CD8-positive, alpha-beta memory T cell (primary cell): ENCODE measurements at regions of chr11 and their contacts with region 1.

Region 1: DNA sequence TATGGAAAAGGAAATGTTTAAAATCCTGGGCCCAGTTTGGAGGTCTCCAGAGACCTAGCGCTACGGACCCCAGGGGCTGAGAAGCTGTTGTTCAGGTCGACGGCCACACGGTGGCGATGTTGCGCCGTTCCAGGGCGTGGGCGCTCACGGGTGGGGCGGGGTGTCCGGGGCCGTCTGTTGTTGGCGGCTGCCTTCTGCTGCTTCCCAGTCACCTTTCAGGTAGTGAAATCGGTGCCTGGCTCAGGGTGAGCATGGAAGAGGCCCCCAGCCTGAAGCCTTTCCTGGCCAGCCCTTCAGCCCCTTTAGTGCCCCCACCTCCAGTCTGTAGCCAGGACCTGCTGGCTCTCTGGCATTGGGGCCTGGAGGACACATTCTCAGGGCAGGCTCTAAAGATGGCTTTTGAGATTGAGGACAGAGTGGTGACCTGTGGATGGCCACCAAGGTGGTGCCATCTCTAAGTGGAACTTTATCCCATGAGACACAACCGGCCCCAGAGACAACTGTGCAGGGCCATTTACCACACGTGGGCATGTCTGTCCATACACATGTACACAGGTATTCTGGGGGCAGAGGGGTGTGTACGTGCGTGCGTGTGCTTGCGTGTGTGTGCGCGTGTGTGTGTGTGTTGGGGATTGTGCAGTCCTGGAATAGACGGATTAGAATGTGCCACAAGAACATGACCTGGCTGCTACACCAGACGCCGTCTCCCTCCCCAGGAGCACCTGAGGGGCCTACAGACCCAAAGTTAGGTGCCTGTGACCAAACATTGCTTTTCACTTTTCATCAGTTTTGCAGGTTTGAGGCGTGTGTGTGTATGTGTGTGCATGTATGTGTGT is 53.8 kb downstream of the ST14 start:
- DNase-seq: peak; percentile 55 to 74 (median 59)
- H3K4me3 ChIP-seq: no peak overlapping the region
- H3K4me3 Mint-ChIP-seq: no peak overlapping the region
- H3K27ac ChIP-seq: no peak overlapping the region
- H3K27ac Mint-ChIP-seq: peak overlapping the region in 1 of 8 donors; percentile 76
- H3K4me1 ChIP-seq: peaks cover 8% of the 10 kb centered on the region
- H3K4me1 Mint-ChIP-seq: peaks cover 0 to 2% (median 0%) of the 10 kb centered on the region in 3 donors
- H3K27me3 ChIP-seq: no peaks in the 10 kb centered on the region
- H3K27me3 Mint-ChIP-seq: peaks cover 11 to 15% of the 10 kb centered on the region in 2 donors

Region 2: DNA sequence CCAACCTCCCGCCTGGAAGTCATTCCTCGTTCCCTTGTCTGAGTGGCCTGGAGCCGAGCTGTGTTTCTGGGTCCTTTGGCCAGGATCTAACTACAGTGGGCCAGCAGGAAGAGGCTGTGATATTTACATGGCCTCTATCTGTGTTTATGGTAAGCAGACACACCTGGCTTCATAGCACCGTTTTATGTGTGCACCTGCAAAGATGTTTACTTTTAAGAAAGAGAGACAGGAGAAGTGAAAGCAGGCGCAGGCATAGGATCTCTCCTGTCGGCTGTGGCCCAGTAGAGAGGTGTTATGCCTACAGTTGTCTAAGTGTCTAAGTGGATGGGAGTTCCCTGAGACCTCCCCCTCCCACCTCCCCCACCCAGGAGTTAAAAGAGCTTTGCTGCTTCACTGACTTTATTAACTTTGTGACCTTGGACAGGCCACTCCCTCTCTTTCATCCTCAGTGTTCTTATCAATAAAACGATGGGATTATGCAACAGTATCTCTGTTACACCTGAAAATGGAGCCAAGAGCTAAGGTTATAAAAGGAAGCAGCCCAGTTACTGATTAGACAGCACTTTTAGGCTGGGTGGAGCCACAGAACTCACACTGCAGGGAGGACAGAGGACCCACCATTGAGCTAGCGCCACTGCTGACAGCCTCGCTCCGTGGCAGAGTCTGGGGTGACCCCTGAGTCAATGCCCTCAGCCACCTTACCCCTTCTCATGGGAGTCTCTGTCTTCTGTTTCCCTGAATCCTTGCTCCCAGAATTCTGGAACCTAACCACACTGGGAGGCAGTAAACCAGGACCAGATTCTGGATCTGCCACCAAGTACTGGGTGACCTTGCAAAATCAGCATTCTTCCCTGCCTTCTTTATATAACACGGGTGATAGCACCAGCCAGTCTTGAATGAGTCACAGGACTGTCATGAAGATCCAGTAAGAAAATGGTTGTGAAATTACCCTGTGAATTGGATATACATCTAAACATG is 31.8 kb before region 1 on chr11:
- CTCF ChIA-PET with region 1: no interaction called
- POLR2A ChIA-PET with region 1: no interaction called
- DNase-seq: no peak
- H3K4me3 ChIP-seq: no peak overlapping the region
- H3K4me3 Mint-ChIP-seq: no peak overlapping the region
- H3K27ac ChIP-seq: no peak overlapping the region
- H3K27ac Mint-ChIP-seq: peak overlapping the region in 1 of 8 donors; percentile 8
- H3K4me1 ChIP-seq: no peaks in the 10 kb centered on the region
- H3K4me1 Mint-ChIP-seq: no peaks in the 10 kb centered on the region
- H3K27me3 ChIP-seq: no peaks in the 10 kb centered on the region
- H3K27me3 Mint-ChIP-seq: peaks cover 5 to 28% of the 10 kb centered on the region in 2 donors

Region 3: GRCh38 chr11:130370845-130371590 is 157.7 kb after region 1 on chr11:
- CTCF ChIA-PET with region 1: interaction called, 13 read pairs
- POLR2A ChIA-PET with region 1: no interaction called
- DNase-seq: peak in 1 of 5 donors; percentile 5
- H3K4me3 ChIP-seq: no peak overlapping the region
- H3K4me3 Mint-ChIP-seq: no peak overlapping the region
- H3K27ac ChIP-seq: no peak overlapping the region
- H3K27ac Mint-ChIP-seq: no peak overlapping the region
- H3K4me1 ChIP-seq: no peaks in the 10 kb centered on the region
- H3K4me1 Mint-ChIP-seq: no peaks in the 10 kb centered on the region
- H3K27me3 ChIP-seq: no peaks in the 10 kb centered on the region
- H3K27me3 Mint-ChIP-seq: peaks cover 3 to 31% of the 10 kb centered on the region in 2 donors

Region 4: GRCh38 chr11:130434521-130435223 is 221.3 kb after region 1 on chr11:
- CTCF ChIA-PET with region 1: interaction called, 12 read pairs
- POLR2A ChIA-PET with region 1: no interaction called
- DNase-seq: peak; percentile 43 to 68 (median 58)
- H3K4me3 ChIP-seq: peak overlapping the region; percentile 77
- H3K4me3 Mint-ChIP-seq: no peak overlapping the region
- H3K27ac ChIP-seq: no peak overlapping the region
- H3K27ac Mint-ChIP-seq: no peak overlapping the region
- H3K4me1 ChIP-seq: peaks cover 9% of the 10 kb centered on the region
- H3K4me1 Mint-ChIP-seq: peaks cover 15 to 19% (median 15%) of the 10 kb centered on the region in 3 donors
- H3K27me3 ChIP-seq: peaks cover 8% of the 10 kb centered on the region
- H3K27me3 Mint-ChIP-seq: peaks cover 13 to 20% of the 10 kb centered on the region in 2 donors